ENCODE measurements at regions of chr12 and their contacts with region 1.

Region 1: DNA sequence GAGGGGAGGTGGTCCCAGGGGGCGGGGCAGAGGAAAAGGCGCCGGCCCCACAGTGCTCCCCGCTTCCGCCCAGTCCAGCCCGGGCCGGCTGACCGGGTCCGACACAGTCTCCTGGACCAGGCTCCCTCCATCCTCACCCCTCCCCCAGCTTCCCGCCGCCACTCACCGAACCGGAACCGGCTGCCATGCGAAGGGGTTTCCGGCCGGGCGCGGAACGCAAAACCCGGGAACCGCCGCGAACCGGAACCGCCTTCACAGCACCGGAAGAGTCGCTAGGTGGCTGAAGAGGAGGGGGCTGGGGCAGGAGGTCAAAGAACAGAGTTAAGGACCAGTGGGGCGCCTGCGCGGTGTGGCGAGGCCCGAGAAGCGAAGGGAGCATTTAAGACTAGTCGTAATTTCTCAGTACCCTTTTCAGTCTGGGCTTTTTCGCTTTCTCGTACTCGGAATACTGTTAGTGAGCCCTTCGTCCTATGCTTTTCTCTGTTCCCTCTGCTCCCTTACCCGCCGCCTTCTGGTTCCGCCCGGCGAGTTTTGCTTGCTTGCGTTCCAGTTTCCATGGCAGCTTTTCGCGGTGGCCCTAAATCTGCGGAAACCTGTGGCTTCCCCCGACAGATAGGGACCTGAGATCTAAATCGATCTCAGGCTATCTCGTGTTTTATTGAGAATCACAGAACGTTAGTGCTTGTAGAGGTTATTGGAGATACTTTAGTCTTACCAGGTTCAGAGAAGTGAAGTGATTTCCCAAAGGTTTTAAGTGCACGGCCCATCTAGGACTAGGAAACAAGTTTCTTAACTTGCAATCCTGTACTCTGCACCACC is at the start of gene SENP1:
- DNase-seq: peak; percentile 87
- H3K4me3 Mint-ChIP-seq: peak within 1 kb of the TSS; percentile 97
- H3K27ac Mint-ChIP-seq: peak within 1 kb of the TSS; percentile 96
- H3K4me1 Mint-ChIP-seq: peaks cover 48% of the 10 kb centered on the region
- H3K27me3 Mint-ChIP-seq: peaks cover 5% of the 10 kb centered on the region
- total RNA-seq, gene SENP1: 51.3 and 52.2 TPM in 2 replicates

Region 2: GRCh38 chr12:47882781-47883546 is 223.1 kb before region 1 on chr12:
- intact Hi-C with region 1: loop called (anchors 5 kb)
- DNase-seq: peak; percentile 44
- H3K4me3 Mint-ChIP-seq: peak overlapping the region; percentile 94
- H3K27ac Mint-ChIP-seq: peak overlapping the region; percentile 100
- H3K4me1 Mint-ChIP-seq: peaks cover 91% of the 10 kb centered on the region
- H3K27me3 Mint-ChIP-seq: no peaks in the 10 kb centered on the region

Region 3: DNA sequence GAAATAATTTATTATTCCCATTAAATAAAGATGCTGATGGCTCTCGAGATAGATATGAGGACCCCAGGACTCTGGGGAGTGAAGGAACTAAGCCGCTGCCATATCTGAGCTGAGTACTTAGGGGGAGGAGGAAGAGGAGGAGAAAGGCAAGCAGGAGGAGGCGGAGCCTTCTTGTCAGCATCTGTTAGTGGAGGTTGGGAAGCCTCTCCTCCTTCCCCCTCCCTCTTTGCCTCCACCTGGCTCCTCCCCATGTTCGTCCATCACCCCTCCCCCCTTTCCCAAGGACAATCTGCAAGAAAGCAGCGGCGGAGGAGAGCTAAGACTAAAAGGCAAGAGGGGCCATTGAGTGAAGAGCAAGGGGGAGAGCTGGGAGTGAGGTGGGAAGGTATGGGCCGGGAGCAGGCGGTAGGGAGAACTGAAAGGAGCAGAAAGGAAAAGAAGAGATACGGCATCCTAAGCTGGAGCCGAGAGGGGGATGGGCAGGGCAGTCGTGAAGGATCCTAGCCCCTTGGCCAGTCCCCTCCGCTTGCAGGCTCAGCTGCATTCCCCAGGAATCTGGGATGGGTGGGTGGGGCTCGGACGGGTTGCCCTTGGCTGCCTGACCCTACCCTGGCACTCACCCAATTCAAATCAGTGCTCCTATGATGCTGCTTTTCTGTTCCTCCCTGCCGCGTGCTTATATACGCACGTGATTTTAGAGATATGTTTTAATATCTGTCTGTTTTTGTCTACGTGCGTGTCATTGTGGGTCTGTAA is 13.2 kb after region 1 on chr12 and contains the start of gene PFKM:
- intact Hi-C with region 1: loop called (anchors 1 kb)
- DNase-seq: peak; percentile 65
- H3K4me3 Mint-ChIP-seq: peak within 1 kb of the TSS; percentile 98
- H3K27ac Mint-ChIP-seq: peak within 1 kb of the TSS; percentile 75
- H3K4me1 Mint-ChIP-seq: peaks cover 17% of the 10 kb centered on the region
- H3K27me3 Mint-ChIP-seq: peaks cover 10% of the 10 kb centered on the region
- total RNA-seq, gene PFKM: 59.7 and 68.4 TPM in 2 replicates

Region 4: DNA sequence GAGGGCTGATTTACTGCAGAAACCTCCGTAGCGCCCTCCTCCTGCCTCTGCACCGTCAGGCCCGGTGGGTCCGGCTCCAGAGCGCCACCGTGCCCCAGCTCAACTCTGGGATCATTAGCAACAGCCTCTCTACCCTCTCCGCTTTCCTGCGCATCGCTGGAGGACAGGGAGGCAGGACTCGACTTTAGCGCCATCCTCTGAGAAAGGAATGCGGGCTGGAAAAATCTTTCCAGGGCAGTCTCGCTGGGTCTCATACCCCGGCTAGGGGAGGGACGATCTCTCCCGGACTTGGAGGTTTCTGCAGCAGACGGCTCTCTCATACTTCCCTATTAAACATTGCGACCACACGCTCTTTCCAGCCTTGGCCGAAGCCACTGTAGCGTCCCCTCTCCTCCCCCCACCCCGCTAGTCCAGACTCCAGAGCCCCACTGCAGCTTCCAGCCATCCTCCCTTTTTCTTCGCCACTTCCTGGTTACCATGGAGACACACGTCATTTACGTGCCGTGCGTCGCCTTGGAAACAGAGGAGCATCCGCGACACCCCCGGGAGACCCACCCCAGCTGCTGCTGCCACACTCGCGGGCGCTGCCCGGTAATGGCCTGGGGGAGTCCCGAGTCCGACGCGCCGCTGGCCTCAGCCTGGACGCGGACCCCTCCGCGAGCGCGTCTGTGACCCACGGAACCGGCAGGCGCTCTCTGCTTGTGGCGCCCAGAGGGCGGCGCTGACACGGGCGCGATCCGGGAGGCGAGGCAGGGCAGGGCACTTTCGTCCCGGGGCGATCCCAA is 77.2 kb after region 1 on chr12 and contains the start of gene CCDC184:
- intact Hi-C with region 1: loop called (anchors 5 kb)
- DNase-seq: peak; percentile 76
- H3K4me3 Mint-ChIP-seq: peak within 1 kb of the TSS; percentile 91
- H3K27ac Mint-ChIP-seq: peak within 1 kb of the TSS; percentile 82
- H3K4me1 Mint-ChIP-seq: peaks cover 35% of the 10 kb centered on the region
- H3K27me3 Mint-ChIP-seq: peaks cover 52% of the 10 kb centered on the region
- total RNA-seq, gene CCDC184: 0.61 and 0.75 TPM in 2 replicates

Region 5: DNA sequence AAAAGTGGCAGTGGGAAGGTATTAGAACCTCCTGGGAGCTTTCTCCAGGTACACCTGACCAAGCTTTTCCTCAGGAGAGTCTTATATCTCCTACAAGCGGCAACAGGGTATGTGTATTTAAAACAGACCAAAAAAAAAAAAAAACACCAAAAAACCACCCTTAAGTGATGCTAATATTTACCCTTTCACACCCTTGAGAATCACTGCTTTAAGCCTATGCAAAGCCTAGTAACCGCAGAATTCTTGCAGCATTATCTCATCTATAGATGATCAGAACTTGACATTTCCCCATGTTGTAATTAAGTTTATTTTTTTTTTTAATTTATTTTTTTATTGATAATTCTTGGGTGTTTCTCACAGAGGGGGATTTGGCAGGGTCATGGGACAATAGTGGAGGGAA is 225.3 kb after region 1 on chr12:
- intact Hi-C with region 1: no loop called
- DNase-seq: no peak
- H3K4me3 Mint-ChIP-seq: no peak overlapping the region
- H3K27ac Mint-ChIP-seq: no peak overlapping the region
- H3K4me1 Mint-ChIP-seq: no peaks in the 10 kb centered on the region
- H3K27me3 Mint-ChIP-seq: no peaks in the 10 kb centered on the region

Region 6: DNA sequence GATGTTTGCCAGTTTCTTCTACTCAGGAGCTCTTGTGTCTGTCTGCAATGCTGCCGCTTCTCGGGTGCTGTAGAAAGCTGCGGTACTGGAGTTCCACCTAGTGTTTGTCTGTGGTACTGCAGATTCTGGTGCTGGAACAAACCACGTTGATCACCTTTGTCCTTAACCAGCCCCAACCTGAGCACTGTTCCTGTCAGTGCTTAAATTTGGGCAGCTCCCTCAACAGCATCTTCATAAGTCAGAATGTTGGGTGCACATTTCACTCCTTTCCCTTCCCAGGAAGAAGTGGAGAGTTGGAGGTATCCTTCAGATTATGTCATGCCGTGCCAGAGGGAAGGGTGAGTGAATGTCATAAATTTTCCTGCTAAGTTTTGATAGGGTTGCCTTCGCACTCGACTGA is 512.5 kb after region 1 on chr12:
- intact Hi-C with region 1: loop called (anchors 5 kb)
- DNase-seq: peak; percentile 71
- H3K4me3 Mint-ChIP-seq: no peak overlapping the region
- H3K27ac Mint-ChIP-seq: no peak overlapping the region
- H3K4me1 Mint-ChIP-seq: peaks cover 7% of the 10 kb centered on the region
- H3K27me3 Mint-ChIP-seq: peaks cover 23% of the 10 kb centered on the region

Region 7: DNA sequence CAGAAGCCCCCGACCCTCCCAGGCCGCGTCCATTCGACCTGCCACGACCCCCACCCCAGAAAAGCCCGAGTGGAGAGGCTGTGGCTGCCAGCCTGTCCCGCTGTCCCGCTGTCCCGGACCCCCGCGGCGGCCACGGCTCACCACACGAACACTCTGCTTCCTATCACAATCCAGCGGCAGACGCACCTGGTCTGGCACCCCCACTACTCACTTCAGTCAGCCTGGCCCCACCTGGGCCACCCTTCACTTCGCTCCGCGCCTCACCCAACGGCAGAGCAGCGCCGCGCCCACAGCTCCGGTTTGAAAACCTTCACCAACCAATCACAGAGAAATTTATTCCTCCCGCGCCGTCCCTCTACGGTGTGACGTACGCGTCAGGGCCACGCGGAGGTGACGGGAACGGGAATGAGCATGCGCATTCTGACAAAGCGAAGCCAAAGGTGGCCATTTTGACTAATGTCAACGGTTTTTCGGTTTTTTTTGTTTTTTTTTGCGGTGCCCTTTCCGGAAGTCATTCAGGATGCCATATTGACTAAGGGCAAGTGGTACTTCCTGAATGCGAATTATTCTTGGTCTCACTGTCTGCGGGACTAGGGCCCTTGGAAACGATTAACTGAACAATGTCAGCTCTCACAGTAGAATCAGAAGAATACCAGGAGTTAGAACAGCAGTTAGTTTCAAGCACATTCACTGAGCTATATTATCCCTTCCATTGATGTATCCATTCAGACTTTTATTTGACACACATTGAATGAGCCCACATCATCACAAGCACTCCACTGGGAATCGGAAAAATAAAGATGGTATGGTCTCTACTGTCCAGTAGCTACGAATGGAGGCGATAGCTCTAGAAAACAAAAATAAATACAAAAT is 1919.4 kb after region 1 on chr12 and contains the start of gene RACGAP1:
- intact Hi-C with region 1: loop called (anchors 5 kb)
- DNase-seq: peak; percentile 98
- H3K4me3 Mint-ChIP-seq: peak within 1 kb of the TSS; percentile 98
- H3K27ac Mint-ChIP-seq: peak within 1 kb of the TSS; percentile 99
- H3K4me1 Mint-ChIP-seq: peaks cover 46% of the 10 kb centered on the region
- H3K27me3 Mint-ChIP-seq: peaks cover 3% of the 10 kb centered on the region
- total RNA-seq, gene RACGAP1: 68.1 and 71.2 TPM in 2 replicates